ENCODE measurements at regions of chr18 and their contacts with region 1.

Region 1: GRCh38 chr18:70195852-70196434 is 9.5 kb downstream of the RTTN start:
- DNase-seq: no peak
- H3K4me3 ChIP-seq: no peak overlapping the region
- H3K27ac ChIP-seq: peak overlapping the region in 3 of 4 donors; percentile 34 to 72 (median 70)
- H3K4me1 ChIP-seq: peaks cover 0 to 17% (median 0%) of the 10 kb centered on the region in 4 donors
- H3K27me3 ChIP-seq: no peaks in the 10 kb centered on the region
- CTCF ChIP-seq: peak; percentile 48 to 72 (median 66)
- EP300 ChIP-seq: no peak
- POLR2A ChIP-seq: no peak

Region 2: DNA sequence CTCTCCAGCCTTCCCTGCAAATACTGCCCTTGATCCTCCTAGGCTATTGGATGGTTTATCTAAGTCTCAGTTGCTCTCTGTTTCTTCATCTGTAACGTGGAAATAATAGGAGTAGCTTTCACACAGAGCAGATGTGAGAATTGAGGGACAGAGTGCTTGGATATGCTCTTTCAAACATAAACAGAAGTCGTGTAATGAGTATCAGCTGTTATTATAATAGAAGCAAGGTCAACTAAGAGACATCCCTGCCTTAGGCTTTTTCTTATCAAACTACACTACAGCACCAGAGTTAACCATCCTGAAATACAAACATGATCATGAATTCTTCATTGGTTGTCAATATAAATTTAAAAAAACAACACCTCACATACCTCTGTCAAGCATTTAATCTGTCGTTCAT is 657.1 kb before region 1 on chr18:
- intact Hi-C with region 1: no loop called
- DNase-seq: no peak
- H3K4me3 ChIP-seq: no peak overlapping the region
- H3K27ac ChIP-seq: no peak overlapping the region
- H3K4me1 ChIP-seq: no peaks in the 10 kb centered on the region
- H3K27me3 ChIP-seq: no peaks in the 10 kb centered on the region
- CTCF ChIP-seq: no peak
- EP300 ChIP-seq: no peak
- POLR2A ChIP-seq: no peak

Region 3: GRCh38 chr18:69865776-69866175 is 330.2 kb before region 1 on chr18:
- intact Hi-C with region 1: no loop called
- DNase-seq: no peak
- H3K4me3 ChIP-seq: no peak overlapping the region
- H3K27ac ChIP-seq: no peak overlapping the region
- H3K4me1 ChIP-seq: no peaks in the 10 kb centered on the region
- H3K27me3 ChIP-seq: no peaks in the 10 kb centered on the region
- CTCF ChIP-seq: no peak
- EP300 ChIP-seq: no peak
- POLR2A ChIP-seq: no peak

Region 4: DNA sequence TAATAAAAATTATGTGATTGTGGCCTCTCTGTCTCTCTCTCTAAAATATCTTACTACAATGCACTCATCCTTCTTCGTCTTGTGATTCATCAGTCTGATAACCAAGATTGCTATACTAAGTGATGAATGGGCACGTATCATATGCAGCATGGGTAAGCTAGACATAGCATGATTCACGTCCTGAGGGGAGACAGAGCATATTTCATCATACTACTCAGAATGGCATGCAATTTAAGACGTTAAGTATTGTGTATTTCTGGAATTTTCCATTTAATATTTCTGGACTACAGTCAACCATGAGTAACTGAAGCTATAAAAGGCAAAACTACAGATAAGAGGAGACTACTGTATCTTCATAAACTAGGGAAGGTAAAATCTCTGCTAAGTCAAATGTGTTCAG is 151.3 kb before region 1 on chr18:
- intact Hi-C with region 1: no loop called
- DNase-seq: no peak
- H3K4me3 ChIP-seq: no peak overlapping the region
- H3K27ac ChIP-seq: no peak overlapping the region
- H3K4me1 ChIP-seq: no peaks in the 10 kb centered on the region
- H3K27me3 ChIP-seq: no peaks in the 10 kb centered on the region
- CTCF ChIP-seq: no peak
- EP300 ChIP-seq: no peak
- POLR2A ChIP-seq: no peak

Region 5: GRCh38 chr18:70431203-70431624 is 235.3 kb after region 1 on chr18:
- intact Hi-C with region 1: loop called (anchors 2 kb)
- DNase-seq: no peak
- H3K4me3 ChIP-seq: no peak overlapping the region
- H3K27ac ChIP-seq: no peak overlapping the region
- H3K4me1 ChIP-seq: peaks cover 0 to 5% (median 0%) of the 10 kb centered on the region in 4 donors
- H3K27me3 ChIP-seq: no peaks in the 10 kb centered on the region
- CTCF ChIP-seq: no peak
- EP300 ChIP-seq: no peak
- POLR2A ChIP-seq: no peak

Region 6: DNA sequence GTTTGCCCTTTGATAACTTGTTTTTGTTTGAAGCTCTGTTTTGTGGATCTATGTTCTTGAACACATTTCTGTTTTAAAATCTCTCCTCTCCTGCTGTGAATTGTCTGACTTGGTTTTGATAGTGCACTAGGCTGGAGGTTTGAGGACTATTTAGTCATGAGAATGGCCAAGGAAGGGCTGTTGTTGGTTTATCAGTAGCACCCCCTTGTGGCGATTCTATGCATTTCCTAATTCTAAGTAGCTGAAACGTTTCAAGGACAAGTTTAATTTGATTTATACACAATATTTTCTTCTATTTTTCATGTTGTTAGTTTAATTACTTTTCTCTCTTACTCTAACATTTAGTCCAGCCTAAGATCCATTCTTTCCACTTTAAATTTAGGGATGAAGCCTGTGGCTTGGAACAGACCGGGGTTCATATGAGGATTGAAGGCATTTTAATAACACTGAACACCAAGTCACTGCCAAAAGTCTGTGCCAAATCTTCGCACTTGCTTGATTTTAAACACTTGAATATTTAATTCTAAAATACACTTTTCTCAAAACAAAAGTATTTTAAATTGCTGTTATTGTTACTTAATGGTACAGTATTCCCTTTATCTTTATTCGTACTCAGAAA is 258.9 kb after region 1 on chr18:
- intact Hi-C with region 1: loop called (anchors 5 kb)
- DNase-seq: no peak
- H3K4me3 ChIP-seq: no peak overlapping the region
- H3K27ac ChIP-seq: no peak overlapping the region
- H3K4me1 ChIP-seq: peaks cover 0 to 3% (median 0%) of the 10 kb centered on the region in 4 donors
- H3K27me3 ChIP-seq: no peaks in the 10 kb centered on the region
- CTCF ChIP-seq: peak in 3 of 4 experiments; percentile 55 to 71 (median 70)
- EP300 ChIP-seq: no peak
- POLR2A ChIP-seq: no peak

Measured in sigmoid colon (tissue), 7 donors.